K562 (cell line): ENCODE measurements at regions of chr5 and their contacts with region 1.

Region 1: GRCh38 chr5:74919487-74919886 is 53.3 kb upstream of the FAM169A start:
- DNase-seq: peak; percentile 54 to 73 (median 70)
- ATAC-seq: peak; percentile 86
- H3K4me3 ChIP-seq: no peak overlapping the region
- H3K27ac ChIP-seq: no peak overlapping the region
- H3K4me1 ChIP-seq: no peaks in the 10 kb centered on the region
- H3K27me3 ChIP-seq: no peaks in the 10 kb centered on the region
- CTCF ChIP-seq: peak; percentile 39 to 72 (median 65); a peak in 5 of 6 replicates
- EP300 ChIP-seq: no peak
- POLR2A ChIP-seq: no peak
- RAD21 ChIP-seq: peak; percentile 45 to 62; a peak in 3 of 4 replicates

Region 2: GRCh38 chr5:73902327-73903051 is 1017.0 kb before region 1 on chr5:
- CTCF ChIA-PET with region 1: interaction called, 5 read pairs
- POLR2A ChIA-PET with region 1: no interaction called
- in situ Hi-C with region 1: loop called (anchors 10 kb)
- intact Hi-C with region 1: no loop called
- DNase-seq: peak; percentile 22 to 55 (median 33)
- ATAC-seq: peak; percentile 48; the same call in 1 of the 3 replicates
- H3K4me3 ChIP-seq: no peak overlapping the region
- H3K27ac ChIP-seq: no peak overlapping the region
- H3K4me1 ChIP-seq: no peaks in the 10 kb centered on the region
- H3K27me3 ChIP-seq: peaks cover 5 to 23% of the 10 kb centered on the region in 2 experiments; a peak in 4 of 5 replicates
- CTCF ChIP-seq: peak; percentile 66 to 84 (median 70)
- EP300 ChIP-seq: no peak
- POLR2A ChIP-seq: no peak
- RAD21 ChIP-seq: peak; percentile 87 to 89

Region 3: DNA sequence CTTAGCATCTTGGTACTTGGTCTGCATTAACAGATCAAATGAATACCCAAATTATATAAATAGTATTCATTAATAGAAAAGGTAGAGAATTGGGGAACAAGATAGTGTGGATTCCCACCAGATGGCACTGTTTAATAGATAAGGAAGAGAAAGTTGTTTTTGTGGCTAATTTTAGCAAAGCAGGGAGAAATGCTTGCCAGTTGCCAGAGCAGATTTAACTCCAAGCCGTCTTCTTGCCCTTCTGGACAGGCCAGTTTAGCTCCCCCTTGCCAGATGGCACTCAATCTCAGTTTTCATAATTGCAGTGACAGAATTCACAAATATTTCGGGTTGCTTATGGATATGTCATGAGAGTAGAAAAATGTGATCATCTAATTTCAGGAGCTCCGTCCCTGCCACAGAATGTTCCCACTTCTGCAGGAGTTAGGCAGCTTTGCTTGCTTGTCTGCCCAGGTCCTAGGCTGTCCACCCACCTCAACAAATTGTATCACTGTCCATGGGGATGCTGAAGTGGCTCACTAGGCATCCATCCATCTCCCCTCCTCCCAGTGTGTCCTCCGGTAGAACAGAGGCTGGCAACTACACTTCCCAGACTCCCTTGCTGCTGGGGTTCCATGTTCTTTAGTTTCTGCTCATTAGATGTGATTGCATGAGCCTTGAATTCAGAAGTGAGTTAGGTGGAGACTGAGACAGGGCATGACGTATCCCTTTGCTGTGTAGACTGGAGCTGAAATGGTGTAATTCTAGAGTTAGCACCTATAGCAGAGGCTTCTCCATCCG is 246.3 kb before region 1 on chr5:
- CTCF ChIA-PET with region 1: interaction called, 12 read pairs
- POLR2A ChIA-PET with region 1: no interaction called
- in situ Hi-C with region 1: loop called (anchors 5 kb)
- intact Hi-C with region 1: loop called (anchors 1 kb)
- DNase-seq: peak in 1 of 4 experiments; percentile 24
- ATAC-seq: peak; percentile 88
- H3K4me3 ChIP-seq: no peak overlapping the region
- H3K27ac ChIP-seq: no peak overlapping the region
- H3K4me1 ChIP-seq: no peaks in the 10 kb centered on the region; a peak in 1 of 5 replicates
- H3K27me3 ChIP-seq: peaks cover 10 to 22% of the 10 kb centered on the region in 2 experiments; a peak in 4 of 5 replicates
- CTCF ChIP-seq: peak; percentile 33 to 64 (median 43); a peak in 4 of 6 replicates
- EP300 ChIP-seq: no peak
- POLR2A ChIP-seq: no peak
- RAD21 ChIP-seq: peak; percentile 64 to 74

Region 4: DNA sequence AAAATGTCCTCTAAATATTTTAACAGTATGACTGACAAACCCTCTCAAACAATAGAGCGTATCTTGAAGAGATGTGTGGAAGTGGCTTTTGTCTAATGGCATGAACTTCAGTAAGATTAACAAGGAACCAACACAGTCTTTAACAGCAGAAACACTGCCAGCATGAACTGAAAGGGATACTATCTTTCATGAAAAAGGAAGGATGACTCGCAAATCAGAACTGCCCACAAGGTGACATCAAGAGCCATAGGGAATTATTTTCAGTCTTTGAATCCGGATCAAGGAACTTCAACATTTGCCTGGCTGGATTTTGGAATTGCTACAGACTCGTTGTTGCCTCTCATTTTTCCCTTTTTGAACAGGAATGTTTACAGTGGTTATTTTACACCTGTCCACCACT is 239.5 kb before region 1 on chr5:
- CTCF ChIA-PET with region 1: no interaction called
- POLR2A ChIA-PET with region 1: no interaction called
- in situ Hi-C with region 1: loop called (anchors 5 kb)
- intact Hi-C with region 1: no loop called
- DNase-seq: no peak
- ATAC-seq: no peak
- H3K4me3 ChIP-seq: no peak overlapping the region
- H3K27ac ChIP-seq: no peak overlapping the region
- H3K4me1 ChIP-seq: peaks cover 2 to 14% of the 10 kb centered on the region in 2 experiments; a peak in 4 of 5 replicates
- H3K27me3 ChIP-seq: no peaks in the 10 kb centered on the region; a peak in 1 of 5 replicates
- CTCF ChIP-seq: no peak
- EP300 ChIP-seq: no peak
- POLR2A ChIP-seq: no peak
- RAD21 ChIP-seq: no peak

Region 5: DNA sequence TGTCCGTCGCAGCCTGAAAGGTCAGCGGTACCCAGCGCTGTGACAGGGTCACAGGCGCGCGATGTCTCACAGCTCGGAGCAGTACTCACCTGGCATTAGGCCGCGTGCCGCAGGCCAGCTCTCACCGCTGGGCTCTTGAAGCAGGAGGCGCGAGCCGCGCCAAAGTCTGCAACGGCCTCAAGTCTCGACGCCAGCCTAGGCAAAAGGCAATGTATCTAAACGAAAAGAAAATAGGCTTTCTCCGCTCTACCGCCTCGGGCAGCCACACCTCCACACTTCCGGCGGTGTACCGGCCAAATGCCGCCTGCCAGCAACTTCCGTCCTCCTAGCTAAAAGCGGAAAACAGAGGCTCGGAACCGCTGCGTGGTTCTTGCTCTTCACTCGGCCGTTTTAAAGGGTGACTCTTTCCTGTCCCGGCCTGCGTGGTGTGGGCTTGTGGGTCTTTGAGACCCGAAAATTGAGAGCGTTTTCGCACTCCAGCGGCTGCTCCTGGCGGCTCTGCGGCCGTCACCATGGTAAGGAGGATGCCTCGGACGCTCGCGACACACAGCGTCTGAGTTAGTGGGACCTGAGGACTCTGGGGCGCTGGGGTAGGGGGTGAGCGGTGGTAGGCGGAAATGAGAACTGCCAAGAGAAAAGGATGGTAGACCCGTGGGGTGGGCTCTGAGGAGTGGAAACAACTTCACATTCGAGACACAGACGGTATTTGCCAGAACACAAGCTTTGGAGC is 152.5 kb before region 1 on chr5 and contains the starts of genes GFM2 and NSA2:
- CTCF ChIA-PET with region 1: interaction called, 6 read pairs
- POLR2A ChIA-PET with region 1: no interaction called
- in situ Hi-C with region 1: no loop called
- intact Hi-C with region 1: loop called (anchors 5 kb)
- DNase-seq: peak; percentile 71 to 95 (median 76)
- ATAC-seq: peak; percentile 93
- H3K4me3 ChIP-seq: peak within 1 kb of the TSS; percentile 87
- H3K27ac ChIP-seq: peak within 1 kb of the TSS; percentile 83
- H3K4me1 ChIP-seq: peaks cover 8 to 12% of the 10 kb centered on the region in 2 experiments; a peak in 4 of 5 replicates
- H3K27me3 ChIP-seq: no peaks in the 10 kb centered on the region
- CTCF ChIP-seq: no peak
- EP300 ChIP-seq: peak; percentile 52; the same call in 1 of the 2 replicates
- POLR2A ChIP-seq: peak; percentile 91
- RAD21 ChIP-seq: 0 out of 4 replicates have a peak, but pooled peaks of 1 of the 2 experiments have one; percentile 7
- polyA plus RNA-seq, gene GFM2: 32.8 to 74.3 TPM
- polyA plus RNA-seq, gene NSA2: 60.2 to 67.6 TPM

Region 6: GRCh38 chr5:74938250-74938933 is 18.9 kb after region 1 on chr5:
- CTCF ChIA-PET with region 1: no interaction called
- POLR2A ChIA-PET with region 1: no interaction called
- in situ Hi-C with region 1: no loop called
- intact Hi-C with region 1: no loop called
- DNase-seq: no peak
- ATAC-seq: no peak
- H3K4me3 ChIP-seq: no peak overlapping the region
- H3K27ac ChIP-seq: no peak overlapping the region
- H3K4me1 ChIP-seq: no peaks in the 10 kb centered on the region
- H3K27me3 ChIP-seq: peaks cover 2 to 4% of the 10 kb centered on the region in 2 experiments; a peak in 2 of 5 replicates
- CTCF ChIP-seq: no peak
- EP300 ChIP-seq: no peak
- POLR2A ChIP-seq: no peak
- RAD21 ChIP-seq: no peak

Region 7: GRCh38 chr5:76325876-76326491 is 1406.5 kb after region 1 on chr5:
- CTCF ChIA-PET with region 1: no interaction called
- POLR2A ChIA-PET with region 1: no interaction called
- in situ Hi-C with region 1: no loop called
- intact Hi-C with region 1: no loop called
- DNase-seq: no peak
- ATAC-seq: no peak
- H3K4me3 ChIP-seq: no peak overlapping the region
- H3K27ac ChIP-seq: no peak overlapping the region
- H3K4me1 ChIP-seq: peaks cover under 1 to 5% of the 10 kb centered on the region in 2 experiments; a peak in 3 of 5 replicates
- H3K27me3 ChIP-seq: peaks cover 6 to 10% of the 10 kb centered on the region in 2 experiments; a peak in 2 of 5 replicates
- CTCF ChIP-seq: no peak
- EP300 ChIP-seq: no peak
- POLR2A ChIP-seq: no peak
- RAD21 ChIP-seq: no peak